Activated CD4-positive, alpha-beta memory T cell treated with anti-CD3 and anti-CD28 coated beads, Interleukin-2, amount 10 ng/mL, durations not matched to agents 7 days and 5 days (primary cell): ENCODE measurements at regions of chr1 and their contacts with region 1.

Region 1: DNA sequence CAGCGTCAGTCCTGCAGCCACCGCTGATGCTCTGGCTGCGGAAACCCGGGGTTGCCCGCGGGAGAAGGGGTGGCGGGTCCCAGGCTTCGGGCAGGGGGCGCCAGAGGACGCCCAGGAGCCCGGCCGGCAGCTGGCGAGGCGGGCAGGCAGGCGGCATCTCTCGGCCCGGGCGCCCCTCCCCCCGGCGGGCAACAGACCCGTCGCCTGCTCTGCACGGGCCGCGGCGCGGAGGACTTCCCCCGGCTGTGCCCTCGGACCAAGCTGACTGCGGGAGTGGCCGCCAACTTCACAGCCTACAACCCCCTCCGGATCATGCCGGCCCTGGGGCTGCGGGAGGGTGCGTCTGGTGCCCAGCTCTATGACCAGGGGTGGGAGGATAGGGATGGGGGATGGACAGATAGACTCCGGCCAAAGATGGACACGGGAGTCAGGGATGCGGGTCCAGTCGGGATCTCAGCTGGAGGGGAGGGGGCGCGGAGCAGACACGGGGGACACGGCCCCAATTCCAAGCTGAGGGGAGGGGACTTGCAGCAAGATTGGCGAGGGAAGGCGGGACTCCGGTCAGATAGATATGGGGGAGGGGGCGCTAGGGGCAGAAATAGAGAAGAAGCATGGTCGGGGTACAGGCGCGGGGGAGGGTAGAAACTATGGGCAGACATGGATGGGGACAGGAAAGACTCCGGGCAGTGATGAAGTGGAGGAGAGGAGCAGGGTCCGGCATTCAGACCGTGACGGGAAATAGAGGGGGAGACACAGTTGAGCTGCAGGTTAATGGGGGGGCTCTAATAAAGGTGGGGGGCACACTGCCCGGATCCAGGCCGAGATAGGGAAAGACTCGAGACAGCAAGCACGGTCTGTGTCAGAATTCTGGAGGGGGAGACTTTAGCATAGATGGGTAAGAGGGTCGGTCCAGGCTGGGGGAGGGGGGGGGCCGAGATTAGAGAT is 1.1 kb downstream of the ADGRB2 start:
- DNase-seq: peak; percentile 67
- H3K4me3 Mint-ChIP-seq: peak overlapping the region; percentile 59
- H3K27ac Mint-ChIP-seq: no peak overlapping the region
- H3K4me1 Mint-ChIP-seq: peaks cover 29% of the 10 kb centered on the region
- H3K27me3 Mint-ChIP-seq: peaks cover 60% of the 10 kb centered on the region

Region 2: GRCh38 chr1:31750858-31751510 is 12.0 kb before region 1 on chr1:
- CTCF ChIA-PET with region 1: interaction called, 8 read pairs
- POLR2A ChIA-PET with region 1: interaction called, 11 read pairs
- DNase-seq: peak; percentile 59
- H3K4me3 Mint-ChIP-seq: no peak overlapping the region
- H3K27ac Mint-ChIP-seq: peak overlapping the region; percentile 44
- H3K4me1 Mint-ChIP-seq: peaks cover 31% of the 10 kb centered on the region
- H3K27me3 Mint-ChIP-seq: peaks cover 14% of the 10 kb centered on the region